ENCODE measurements at regions of chr5 and their contacts with region 1.

Region 1: GRCh38 chr5:112995764-112996618 is 19.4 kb downstream of the DCP2 start:
- DNase-seq: peak; percentile 65 to 76 (median 71)
- H3K4me3 ChIP-seq: no peak overlapping the region
- H3K4me3 Mint-ChIP-seq: peak overlapping the region in 2 of 8 donors; percentile 19 to 57
- H3K27ac ChIP-seq: no peak overlapping the region
- H3K27ac Mint-ChIP-seq: peak overlapping the region in 5 of 7 donors; percentile 1 to 52 (median 17)
- H3K4me1 ChIP-seq: peaks cover 11% of the 10 kb centered on the region
- H3K4me1 Mint-ChIP-seq: peaks cover 20 to 41% (median 25%) of the 10 kb centered on the region in 4 donors
- H3K27me3 ChIP-seq: no peaks in the 10 kb centered on the region
- H3K27me3 Mint-ChIP-seq: no peaks in the 10 kb centered on the region

Region 2: GRCh38 chr5:112976432-112977309 is 19.3 kb before region 1 on chr5 and contains the start of gene DCP2:
- CTCF ChIA-PET with region 1: interaction called, 32 read pairs
- POLR2A ChIA-PET with region 1: interaction called, 7 read pairs
- intact Hi-C with region 1: no loop called
- DNase-seq: peak; percentile 95 to 97 (median 97)
- H3K4me3 ChIP-seq: peak within 1 kb of the TSS; percentile 77 to 79
- H3K4me3 Mint-ChIP-seq: peak within 1 kb of the TSS; percentile 96 to 100 (median 99)
- H3K27ac ChIP-seq: peak within 1 kb of the TSS; percentile 85
- H3K27ac Mint-ChIP-seq: peak within 1 kb of the TSS; percentile 94 to 98 (median 97)
- H3K4me1 ChIP-seq: peaks cover 45% of the 10 kb centered on the region
- H3K4me1 Mint-ChIP-seq: peaks cover 31 to 63% (median 43%) of the 10 kb centered on the region in 4 donors
- H3K27me3 ChIP-seq: no peaks in the 10 kb centered on the region
- H3K27me3 Mint-ChIP-seq: peaks cover 0 to 4% of the 10 kb centered on the region in 2 donors
- total RNA-seq, gene DCP2: 116 to 123 TPM

Region 3: GRCh38 chr5:113022661-113023060 is 26.7 kb after region 1 on chr5:
- CTCF ChIA-PET with region 1: interaction called, 28 read pairs
- POLR2A ChIA-PET with region 1: interaction called, 8 read pairs
- intact Hi-C with region 1: loop called (anchors 2 kb)
- DNase-seq: peak; percentile 69 to 83 (median 78)
- H3K4me3 ChIP-seq: peak overlapping the region in 1 of 2 donors; percentile 12
- H3K4me3 Mint-ChIP-seq: peak overlapping the region; percentile 41 to 71 (median 61)
- H3K27ac ChIP-seq: peak overlapping the region; percentile 43
- H3K27ac Mint-ChIP-seq: peak overlapping the region; percentile 62 to 94 (median 91)
- H3K4me1 ChIP-seq: peaks cover 67% of the 10 kb centered on the region
- H3K4me1 Mint-ChIP-seq: peaks cover 53 to 86% (median 71%) of the 10 kb centered on the region in 4 donors
- H3K27me3 ChIP-seq: no peaks in the 10 kb centered on the region
- H3K27me3 Mint-ChIP-seq: no peaks in the 10 kb centered on the region

Region 4: DNA sequence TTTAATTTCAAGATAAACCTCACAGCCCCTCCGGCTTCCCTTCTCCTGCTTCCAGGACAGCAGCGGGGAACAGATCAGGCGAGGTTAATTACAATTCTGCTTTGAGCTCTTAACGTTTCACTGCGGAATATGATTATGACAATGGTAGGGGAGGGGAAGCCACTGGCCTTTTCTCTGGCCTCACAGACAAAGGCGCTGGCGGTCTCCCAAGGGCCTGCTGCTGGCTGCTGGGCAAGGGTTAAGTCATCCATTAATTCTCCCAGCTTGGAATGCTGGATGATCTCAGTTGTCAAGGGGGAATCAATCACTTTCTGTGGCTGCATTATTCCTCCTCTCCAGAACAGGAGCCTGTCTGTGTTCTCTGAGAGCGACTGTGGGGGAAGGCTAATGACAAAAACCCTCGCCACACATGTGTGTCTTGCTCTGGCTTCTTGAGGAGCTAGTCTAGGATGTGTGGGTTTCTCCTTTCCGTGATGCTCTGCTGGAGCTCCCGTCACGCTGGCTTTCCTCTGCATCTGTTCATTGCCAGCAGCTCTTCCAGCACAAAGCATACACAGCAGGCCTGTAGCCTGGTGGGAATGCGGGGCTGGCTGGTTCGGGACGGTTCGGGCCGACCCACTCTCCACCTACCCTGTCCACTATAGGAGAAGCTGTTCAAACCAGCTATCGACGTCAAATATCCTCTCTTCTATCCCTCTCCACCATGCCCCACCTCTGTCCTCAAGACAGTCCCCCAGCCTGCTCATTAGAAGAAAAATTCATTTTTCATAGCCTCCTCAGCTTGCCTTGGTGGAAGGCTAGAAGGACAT is 63.4 kb after region 1 on chr5:
- CTCF ChIA-PET with region 1: interaction called, 14 read pairs
- POLR2A ChIA-PET with region 1: no interaction called
- intact Hi-C with region 1: no loop called
- DNase-seq: no peak
- H3K4me3 ChIP-seq: no peak overlapping the region
- H3K4me3 Mint-ChIP-seq: no peak overlapping the region
- H3K27ac ChIP-seq: no peak overlapping the region
- H3K27ac Mint-ChIP-seq: peak overlapping the region in 2 of 7 donors; percentile 5 to 81
- H3K4me1 ChIP-seq: peaks cover 14% of the 10 kb centered on the region
- H3K4me1 Mint-ChIP-seq: peaks cover 9 to 31% (median 22%) of the 10 kb centered on the region in 4 donors
- H3K27me3 ChIP-seq: no peaks in the 10 kb centered on the region
- H3K27me3 Mint-ChIP-seq: no peaks in the 10 kb centered on the region

Region 5: DNA sequence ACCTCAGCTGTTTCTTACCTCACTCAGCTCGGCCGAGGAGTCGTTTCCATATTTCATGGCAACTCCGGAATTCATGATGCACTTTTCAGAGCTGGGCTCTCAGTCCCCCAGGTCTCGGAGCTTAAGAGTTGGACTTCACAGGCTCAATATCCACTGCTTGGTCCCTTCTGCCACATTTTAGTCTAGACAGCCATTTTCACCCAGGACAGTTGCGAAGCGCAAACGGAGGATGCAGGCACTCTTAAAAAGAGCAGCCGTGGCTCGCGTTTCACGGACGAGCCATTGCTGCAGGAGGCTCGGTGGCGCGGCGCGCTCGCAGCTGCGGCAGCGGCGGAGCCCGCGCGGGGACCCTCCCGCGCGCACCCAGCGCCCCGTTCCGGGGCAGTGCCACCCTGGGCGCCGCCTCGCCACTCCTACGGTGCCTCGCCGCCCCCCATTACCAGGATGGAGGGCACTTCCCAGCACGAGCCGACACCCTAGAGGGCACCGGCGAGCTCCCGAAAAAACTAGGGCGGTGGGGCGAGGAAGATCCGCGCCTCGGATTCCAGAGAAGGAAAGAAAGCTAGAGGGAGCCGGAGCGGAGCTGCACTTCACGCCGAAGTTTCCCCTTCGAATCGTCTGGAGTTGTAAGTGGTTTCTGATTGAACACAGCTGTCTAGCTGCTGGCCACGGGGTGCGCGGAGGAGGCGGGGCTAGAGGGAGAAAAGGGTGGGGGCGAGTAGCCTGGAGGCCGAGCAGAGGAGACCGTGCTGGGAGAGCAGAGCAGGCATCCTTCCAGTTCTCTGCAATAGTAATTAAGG is 298.5 kb after region 1 on chr5:
- CTCF ChIA-PET with region 1: interaction called, 18 read pairs
- POLR2A ChIA-PET with region 1: interaction called, 10 read pairs
- intact Hi-C with region 1: loop called (anchors 1 kb)
- DNase-seq: peak; percentile 69 to 82 (median 71)
- H3K4me3 ChIP-seq: peak overlapping the region; percentile 67 to 77
- H3K4me3 Mint-ChIP-seq: peak overlapping the region; percentile 89 to 97 (median 96)
- H3K27ac ChIP-seq: peak overlapping the region; percentile 26
- H3K27ac Mint-ChIP-seq: peak overlapping the region; percentile 56 to 92 (median 89)
- H3K4me1 ChIP-seq: peaks cover 22% of the 10 kb centered on the region
- H3K4me1 Mint-ChIP-seq: peaks cover 13 to 32% (median 23%) of the 10 kb centered on the region in 4 donors
- H3K27me3 ChIP-seq: peaks cover 12% of the 10 kb centered on the region
- H3K27me3 Mint-ChIP-seq: peaks cover 7 to 14% of the 10 kb centered on the region in 2 donors

Region 6: DNA sequence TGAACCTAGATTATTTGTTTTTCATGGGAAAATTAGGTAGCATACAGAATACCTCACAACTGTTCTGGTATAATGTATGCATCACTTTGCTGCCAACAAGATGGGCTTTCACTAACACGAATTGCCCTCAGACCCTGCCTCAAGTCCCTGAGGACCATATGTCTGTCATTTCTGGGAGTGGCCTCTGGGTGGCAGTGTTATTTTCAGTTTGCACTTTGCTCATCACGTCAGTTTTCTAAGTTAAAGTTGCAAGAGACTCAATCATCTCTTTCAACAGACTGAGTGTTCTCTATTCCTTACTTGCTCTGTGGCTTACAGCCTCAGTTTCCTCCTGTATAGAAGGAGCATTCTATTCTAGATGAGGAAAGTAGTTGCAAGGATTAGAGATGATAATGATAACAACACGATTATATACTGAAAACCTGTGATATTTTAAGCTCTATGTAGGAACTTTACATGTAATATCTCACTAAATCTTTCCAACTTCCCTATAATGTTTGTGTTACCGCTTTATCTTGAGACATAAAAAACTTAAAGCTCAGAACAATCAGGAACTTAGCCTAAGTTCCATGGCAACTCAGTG is 383.1 kb after region 1 on chr5:
- CTCF ChIA-PET with region 1: interaction called, 23 read pairs
- POLR2A ChIA-PET with region 1: no interaction called
- intact Hi-C with region 1: loop called (anchors 1 kb)
- DNase-seq: peak; percentile 43 to 54 (median 48)
- H3K4me3 ChIP-seq: no peak overlapping the region
- H3K4me3 Mint-ChIP-seq: peak overlapping the region; percentile 31 to 84 (median 69)
- H3K27ac ChIP-seq: no peak overlapping the region
- H3K27ac Mint-ChIP-seq: peak overlapping the region in 3 of 7 donors; percentile 5 to 73 (median 19)
- H3K4me1 ChIP-seq: peaks cover 30% of the 10 kb centered on the region
- H3K4me1 Mint-ChIP-seq: peaks cover 33 to 58% (median 48%) of the 10 kb centered on the region in 4 donors
- H3K27me3 ChIP-seq: no peaks in the 10 kb centered on the region
- H3K27me3 Mint-ChIP-seq: peaks cover 4 to 7% of the 10 kb centered on the region in 2 donors

Region 7: GRCh38 chr5:113606298-113607134 is 610.5 kb after region 1 on chr5:
- CTCF ChIA-PET with region 1: interaction called, 34 read pairs
- POLR2A ChIA-PET with region 1: no interaction called
- intact Hi-C with region 1: loop called (anchors 1 kb)
- DNase-seq: peak; percentile 41 to 56 (median 55)
- H3K4me3 ChIP-seq: no peak overlapping the region
- H3K4me3 Mint-ChIP-seq: no peak overlapping the region
- H3K27ac ChIP-seq: no peak overlapping the region
- H3K27ac Mint-ChIP-seq: no peak overlapping the region
- H3K4me1 ChIP-seq: no peaks in the 10 kb centered on the region
- H3K4me1 Mint-ChIP-seq: peaks cover 0 to 3% (median 1%) of the 10 kb centered on the region in 4 donors
- H3K27me3 ChIP-seq: no peaks in the 10 kb centered on the region
- H3K27me3 Mint-ChIP-seq: peaks cover 15 to 18% of the 10 kb centered on the region in 2 donors